Dorsolateral prefrontal cortex (tissue), 120 donors: ENCODE measurements at regions of chr19 and their contacts with region 1.

Region 1: DNA sequence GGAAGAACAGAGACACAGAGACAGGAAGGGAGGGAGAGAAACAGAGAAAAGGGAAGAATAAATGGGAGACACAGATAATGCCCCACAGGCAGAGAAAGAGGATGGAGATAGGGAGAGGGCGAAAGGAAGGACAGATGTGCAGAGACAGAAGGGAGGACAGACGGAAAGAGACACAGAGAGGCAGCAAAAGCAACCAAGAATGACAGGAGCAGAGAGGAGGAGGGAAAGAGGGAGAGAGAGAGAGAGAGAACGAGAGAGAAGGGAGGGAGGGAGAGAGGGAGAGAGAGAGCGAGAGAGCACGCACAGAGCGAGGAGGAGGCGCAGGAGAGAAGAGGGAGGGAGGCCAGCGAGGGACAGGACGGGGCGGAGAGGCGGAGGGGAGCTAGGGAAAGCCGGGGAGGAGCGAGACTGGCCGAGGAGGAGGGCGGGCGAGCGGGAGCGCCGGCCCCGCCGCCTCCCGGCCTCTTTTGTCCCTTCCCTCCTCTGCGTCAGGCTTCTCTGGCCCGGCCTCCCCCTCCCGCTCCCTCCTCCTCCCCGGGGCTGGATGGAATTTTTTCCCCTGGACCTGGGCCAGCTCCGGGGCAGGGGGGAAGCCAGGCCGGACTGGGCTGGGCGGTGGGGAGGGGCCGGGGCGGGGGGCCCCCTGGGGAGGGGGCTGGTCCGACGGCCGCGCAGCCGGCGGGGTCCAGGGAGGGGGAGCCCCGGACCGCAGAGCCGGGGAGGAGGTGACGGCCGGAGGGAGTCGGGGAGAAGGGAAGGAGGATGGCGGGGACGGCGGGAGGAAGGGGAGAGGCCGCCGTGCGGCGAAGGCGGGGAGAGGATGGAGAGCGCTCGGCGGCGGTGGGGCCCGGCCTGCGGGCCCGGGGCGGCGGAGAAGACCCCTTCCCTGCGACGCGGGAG is 4.2 kb upstream of the SPACA6 start:
- DNase-seq: peak; percentile 74 to 96 (median 90)
- H3K4me3 ChIP-seq: peak overlapping the region; percentile 54 to 97 (median 85)
- H3K27ac ChIP-seq: peak overlapping the region; percentile 92 to 99 (median 98)
- H3K27me3 ChIP-seq: no peaks in the 10 kb centered on the region
- CTCF ChIP-seq: peak in 14 of 56 donors; percentile 7 to 41 (median 22)

Region 2: DNA sequence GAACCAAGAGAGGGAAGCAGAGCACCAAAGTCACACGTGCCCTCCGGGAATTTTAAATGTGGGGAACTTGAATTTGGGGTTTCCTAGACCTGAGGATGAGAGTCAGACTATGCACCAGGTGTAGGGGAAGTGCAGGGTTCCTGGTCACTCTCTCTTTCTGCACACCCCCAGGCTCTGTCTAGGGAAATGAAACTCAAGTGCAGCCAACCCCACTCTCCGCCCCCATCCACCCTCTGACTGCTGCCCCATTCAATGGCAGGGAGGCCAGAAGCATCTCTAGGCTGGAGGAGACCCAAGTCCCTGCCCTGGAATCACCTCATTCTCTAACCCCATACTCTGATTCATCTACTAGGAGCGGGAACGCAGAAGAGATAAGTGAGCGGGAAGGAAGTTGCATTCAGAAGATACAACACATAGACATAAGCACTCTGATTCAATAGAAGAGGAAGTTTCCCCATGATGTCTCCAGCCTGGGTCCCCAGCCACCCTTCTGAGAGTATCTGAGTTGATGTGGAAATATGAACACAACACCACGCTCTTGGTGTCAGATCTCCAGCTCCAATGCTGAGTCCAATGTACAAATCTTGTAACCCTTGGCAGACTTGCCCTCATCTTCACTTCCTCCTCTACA is 37.6 kb before region 1 on chr19:
- intact Hi-C with region 1: no loop called
- DNase-seq: no peak
- H3K4me3 ChIP-seq: no peak overlapping the region
- H3K27ac ChIP-seq: peak overlapping the region in 1 of 59 donors; percentile 6
- H3K27me3 ChIP-seq: peaks cover 0 to 7% (median 0%) of the 10 kb centered on the region in 45 donors
- CTCF ChIP-seq: no peak

Region 3: GRCh38 chr19:51703575-51704515 is 14.9 kb after region 1 on chr19:
- intact Hi-C with region 1: loop called (anchors 1 to 2 kb)
- DNase-seq: peak; percentile 89 to 96 (median 94)
- H3K4me3 ChIP-seq: peak overlapping the region; percentile 46 to 97 (median 76)
- H3K27ac ChIP-seq: peak overlapping the region; percentile 63 to 98 (median 95)
- H3K27me3 ChIP-seq: no peaks in the 10 kb centered on the region
- CTCF ChIP-seq: peak; percentile 12 to 74 (median 57)

Region 4: DNA sequence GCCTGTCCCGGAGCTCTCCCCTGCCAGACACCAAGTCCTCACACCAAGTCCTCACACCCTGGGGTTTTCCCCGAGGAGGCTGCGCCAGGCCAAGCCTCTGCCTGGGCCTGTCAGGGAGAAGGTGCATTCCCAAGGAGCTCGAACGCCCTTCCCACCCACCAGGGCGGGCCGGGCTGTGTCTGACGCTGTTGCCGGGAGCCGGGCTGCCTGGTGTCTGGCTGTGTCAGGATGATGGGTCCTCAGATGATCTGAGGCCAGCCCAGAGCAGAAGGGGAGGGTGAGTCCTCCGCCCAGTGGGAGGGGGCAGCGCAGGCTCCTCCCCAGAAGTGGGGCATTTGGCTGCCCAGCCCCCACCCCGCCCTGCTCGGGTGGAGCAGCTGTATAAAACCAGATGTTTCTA is 37.1 kb after region 1 on chr19:
- intact Hi-C with region 1: loop called in 1 of 2 experiments (anchors 2 kb)
- DNase-seq: peak in 9 of 10 donors; percentile 53 to 85 (median 80)
- H3K4me3 ChIP-seq: peak overlapping the region in 30 of 59 donors; percentile 6 to 57 (median 32)
- H3K27ac ChIP-seq: peak overlapping the region in 58 of 59 donors; percentile 13 to 97 (median 82)
- H3K27me3 ChIP-seq: peaks cover 0 to 36% (median 0%) of the 10 kb centered on the region in 45 donors
- CTCF ChIP-seq: peak in 4 of 56 donors; percentile 11 to 21 (median 16)